ENCODE measurements at regions of chr5 and their contacts with region 1.

Region 1: DNA sequence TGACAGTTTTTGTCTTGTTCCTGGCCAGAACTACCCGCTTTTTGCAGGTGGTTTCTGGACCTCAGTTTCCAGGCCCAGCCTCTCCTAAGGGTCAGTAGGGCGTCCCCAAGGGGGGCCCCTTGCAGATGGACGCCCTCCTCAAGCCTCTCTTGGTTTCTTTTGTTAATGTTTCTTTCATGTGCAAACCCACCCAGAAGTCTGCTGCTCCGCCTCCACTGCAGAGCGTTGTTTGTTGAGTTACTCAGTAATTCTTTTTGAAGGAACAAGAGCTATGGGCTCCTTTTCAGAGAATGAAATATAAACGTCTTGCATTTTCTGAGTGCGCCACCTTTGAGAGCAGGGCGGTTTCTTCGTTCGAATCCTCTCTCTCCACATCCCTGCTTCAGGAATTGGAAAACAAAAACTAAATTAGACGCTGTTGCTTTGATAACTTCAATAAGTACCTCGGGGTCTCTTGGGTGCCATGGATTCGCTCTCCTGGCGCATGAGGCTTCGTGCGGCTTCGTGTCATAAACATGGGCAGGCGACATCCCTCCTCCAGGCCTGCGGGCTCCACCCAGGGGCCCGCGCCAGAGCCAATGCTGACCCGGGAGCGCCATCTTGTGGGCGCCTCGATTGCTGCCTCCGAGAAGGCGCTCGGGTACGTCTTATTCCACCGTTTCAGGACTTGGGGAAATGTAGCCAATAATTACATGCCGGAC is 38.3 kb upstream of the CKMT2 start:
- DNase-seq: peak; percentile 12
- H3K4me3 ChIP-seq: peak overlapping the region; percentile 34
- CTCF ChIP-seq: peak; percentile 95

Region 2: DNA sequence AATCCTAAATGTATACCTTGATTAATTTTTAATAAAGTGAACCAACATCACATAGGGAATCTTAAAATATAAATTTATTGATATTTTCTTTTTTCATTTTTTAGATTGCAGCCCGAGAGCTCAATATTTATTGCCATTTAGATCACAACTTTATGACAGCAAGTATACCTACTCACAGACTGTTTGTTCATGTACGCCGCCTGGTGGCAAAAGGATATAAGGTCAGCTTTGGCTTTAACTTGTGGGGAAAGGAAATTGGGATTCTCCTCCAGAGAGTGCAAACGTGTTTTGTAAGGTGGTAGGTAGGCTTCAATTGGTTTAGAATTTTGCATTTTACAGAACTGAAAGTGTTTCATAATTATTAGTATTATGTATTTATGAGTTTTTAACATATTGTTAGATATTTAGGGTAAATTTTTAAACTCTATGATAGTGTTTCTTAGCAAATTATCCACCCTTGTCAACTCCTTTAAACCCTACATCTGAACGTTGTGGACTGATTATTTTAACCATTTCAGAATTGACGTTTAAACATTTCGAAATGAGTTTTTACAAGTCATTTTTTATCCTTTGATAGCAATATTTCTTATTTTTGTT is 522.5 kb before region 1 on chr5:
- CTCF ChIA-PET with region 1: interaction called, 13 read pairs
- POLR2A ChIA-PET with region 1: no interaction called
- DNase-seq: no peak
- H3K4me3 ChIP-seq: no peak overlapping the region
- CTCF ChIP-seq: peak; percentile 78

Region 3: DNA sequence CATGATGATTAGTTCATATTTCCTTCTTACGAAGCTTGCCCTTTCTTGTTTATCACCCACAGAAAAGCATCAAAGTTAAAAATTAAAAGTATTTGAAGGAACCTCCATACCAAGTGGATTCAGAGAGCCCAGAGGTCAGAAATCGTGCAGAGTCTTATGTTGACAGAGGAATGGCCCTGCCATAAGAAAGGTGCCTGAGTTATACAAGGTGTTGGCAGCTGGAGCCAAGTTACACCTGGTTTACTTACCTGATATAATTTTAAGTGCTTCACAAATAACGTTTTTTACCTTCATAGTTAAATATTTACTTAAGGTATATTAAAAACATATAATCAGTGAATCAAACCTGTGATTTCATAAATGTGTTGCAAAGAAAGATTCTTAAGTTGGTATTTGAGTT is 497.7 kb before region 1 on chr5:
- CTCF ChIA-PET with region 1: interaction called, 10 read pairs
- POLR2A ChIA-PET with region 1: no interaction called
- DNase-seq: no peak
- H3K4me3 ChIP-seq: no peak overlapping the region
- CTCF ChIP-seq: no peak

Region 4: DNA sequence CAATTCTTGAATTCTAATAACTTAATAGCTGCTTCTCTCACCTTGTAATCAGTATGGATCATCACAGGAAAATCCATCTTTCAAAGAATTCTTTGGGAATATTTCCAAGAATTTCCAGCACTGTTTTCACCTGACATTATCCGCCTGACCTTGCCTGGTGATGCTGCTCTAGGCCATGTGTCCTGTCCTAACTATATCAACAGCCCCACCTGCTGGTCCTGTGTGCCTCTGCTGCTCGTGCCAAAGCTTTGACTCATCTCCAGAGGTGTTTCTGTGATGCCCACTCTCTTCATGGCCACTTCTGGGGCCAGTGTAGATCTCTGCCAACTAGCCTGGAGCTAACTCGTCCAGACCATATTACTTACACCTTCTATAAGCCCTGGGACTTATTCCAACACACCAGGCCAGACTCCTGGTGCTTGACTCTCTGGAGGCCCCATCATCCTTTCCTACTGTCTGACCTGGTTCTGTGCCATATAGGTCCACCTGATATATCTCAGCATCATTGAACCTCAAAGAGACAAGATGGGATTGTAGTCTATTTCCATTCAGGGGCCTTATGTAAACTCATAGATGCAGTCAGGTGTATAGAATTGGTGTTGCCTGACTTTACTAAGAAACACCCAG is 29.2 kb before region 1 on chr5:
- CTCF ChIA-PET with region 1: interaction called, 10 read pairs
- POLR2A ChIA-PET with region 1: no interaction called
- DNase-seq: no peak
- H3K4me3 ChIP-seq: no peak overlapping the region
- CTCF ChIP-seq: peak; percentile 70

Region 5: GRCh38 chr5:81207009-81207408 is 12.2 kb after region 1 on chr5:
- CTCF ChIA-PET with region 1: interaction called, 23 read pairs
- POLR2A ChIA-PET with region 1: no interaction called
- DNase-seq: no peak
- H3K4me3 ChIP-seq: no peak overlapping the region
- CTCF ChIP-seq: peak; percentile 32

Measured in AG04449 (cell line).